ENCODE measurements at regions of chr5 and their contacts with region 1.

Region 1: DNA sequence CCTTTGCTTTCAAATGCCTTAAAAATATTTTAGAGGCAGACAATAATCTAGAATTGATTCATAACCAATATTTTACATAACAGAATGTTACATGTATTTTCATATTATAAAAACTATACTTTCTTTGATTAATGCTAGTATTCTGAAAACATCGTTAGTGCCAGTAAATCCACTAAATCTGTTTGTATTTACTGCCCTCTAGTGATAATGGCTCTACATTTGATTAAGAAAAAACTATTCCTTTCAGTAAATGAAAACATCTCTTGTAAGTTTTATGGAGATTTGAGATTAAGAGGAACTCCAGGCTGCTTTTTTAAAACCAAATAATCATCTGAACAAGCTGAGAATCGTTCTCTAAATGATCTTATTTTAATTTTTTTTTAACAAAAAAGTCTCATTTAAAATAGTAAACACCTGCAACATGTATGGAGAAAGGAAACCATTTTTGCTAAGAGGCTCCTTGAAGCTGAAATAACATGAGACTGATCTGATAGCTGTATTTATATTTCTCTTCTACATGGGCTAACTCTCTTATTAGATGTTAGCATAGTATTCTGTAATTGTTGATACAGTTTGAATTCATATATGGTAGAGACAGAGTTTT is 424.7 kb downstream of the RAB3C start:
- DNase-seq: no peak
- ATAC-seq: no peak
- H3K4me3 Mint-ChIP-seq: no peak overlapping the region
- H3K27ac Mint-ChIP-seq: no peak overlapping the region
- H3K4me1 Mint-ChIP-seq: no peaks in the 10 kb centered on the region
- H3K27me3 Mint-ChIP-seq: no peaks in the 10 kb centered on the region
- CTCF ChIP-seq: no peak

Region 2: DNA sequence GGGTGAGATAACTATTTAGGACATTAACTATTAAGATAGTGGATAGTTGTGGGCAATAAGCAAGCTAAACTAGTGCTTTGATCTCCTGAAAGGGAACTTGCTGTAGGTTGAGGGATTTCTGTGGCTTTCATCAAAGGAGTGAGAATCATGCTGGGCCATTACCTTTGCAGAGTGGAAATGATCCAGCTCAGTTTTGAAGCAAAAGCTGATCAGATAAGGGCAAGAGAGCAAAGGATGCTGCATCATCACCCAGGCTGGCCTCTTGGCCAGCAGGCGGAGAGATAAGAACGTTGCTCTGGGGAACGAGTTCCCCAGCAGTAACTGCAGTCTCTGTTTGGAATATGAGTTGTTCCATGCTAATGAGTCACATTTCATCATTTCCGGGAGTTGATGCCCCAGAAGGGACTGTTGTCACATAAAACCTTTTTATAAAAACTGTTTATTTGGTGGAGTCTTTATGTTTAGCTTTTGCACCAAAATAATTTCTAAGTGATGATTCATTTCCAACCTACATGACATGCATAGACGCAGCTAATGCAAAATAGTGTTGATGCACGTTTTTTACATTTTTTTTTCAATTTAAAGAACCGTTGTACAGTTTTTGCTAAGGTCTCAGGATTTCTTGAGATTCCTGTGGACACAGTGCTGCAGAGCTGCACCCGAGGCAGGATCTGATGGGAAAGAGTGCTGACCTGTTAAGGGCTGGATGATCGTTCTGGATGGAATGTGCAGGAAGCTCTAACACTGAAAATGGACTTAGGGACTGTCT is 1624.3 kb before region 1 on chr5:
- CTCF ChIA-PET with region 1: no interaction called
- POLR2A ChIA-PET with region 1: no interaction called
- intact Hi-C with region 1: no loop called
- DNase-seq: no peak
- ATAC-seq: no peak
- H3K4me3 Mint-ChIP-seq: no peak overlapping the region
- H3K27ac Mint-ChIP-seq: no peak overlapping the region
- H3K4me1 Mint-ChIP-seq: no peaks in the 10 kb centered on the region
- H3K27me3 Mint-ChIP-seq: no peaks in the 10 kb centered on the region
- CTCF ChIP-seq: no peak

Region 3: GRCh38 chr5:58893551-58893950 is 114.0 kb before region 1 on chr5:
- CTCF ChIA-PET with region 1: interaction called, 13 read pairs
- POLR2A ChIA-PET with region 1: no interaction called
- intact Hi-C with region 1: loop called (anchors 1 kb)
- DNase-seq: no peak
- ATAC-seq: no peak
- H3K4me3 Mint-ChIP-seq: no peak overlapping the region
- H3K27ac Mint-ChIP-seq: no peak overlapping the region
- H3K4me1 Mint-ChIP-seq: peaks cover 4% of the 10 kb centered on the region
- H3K27me3 Mint-ChIP-seq: peaks cover 3% of the 10 kb centered on the region
- CTCF ChIP-seq: no peak

Measured in activated B cell treated with CpG ODN at 0.5 μM for 24 hours (primary cell).